Common myeloid progenitor, CD34-positive (primary cell): ENCODE measurements at regions of chr6 and their contacts with region 1.

Region 1: DNA sequence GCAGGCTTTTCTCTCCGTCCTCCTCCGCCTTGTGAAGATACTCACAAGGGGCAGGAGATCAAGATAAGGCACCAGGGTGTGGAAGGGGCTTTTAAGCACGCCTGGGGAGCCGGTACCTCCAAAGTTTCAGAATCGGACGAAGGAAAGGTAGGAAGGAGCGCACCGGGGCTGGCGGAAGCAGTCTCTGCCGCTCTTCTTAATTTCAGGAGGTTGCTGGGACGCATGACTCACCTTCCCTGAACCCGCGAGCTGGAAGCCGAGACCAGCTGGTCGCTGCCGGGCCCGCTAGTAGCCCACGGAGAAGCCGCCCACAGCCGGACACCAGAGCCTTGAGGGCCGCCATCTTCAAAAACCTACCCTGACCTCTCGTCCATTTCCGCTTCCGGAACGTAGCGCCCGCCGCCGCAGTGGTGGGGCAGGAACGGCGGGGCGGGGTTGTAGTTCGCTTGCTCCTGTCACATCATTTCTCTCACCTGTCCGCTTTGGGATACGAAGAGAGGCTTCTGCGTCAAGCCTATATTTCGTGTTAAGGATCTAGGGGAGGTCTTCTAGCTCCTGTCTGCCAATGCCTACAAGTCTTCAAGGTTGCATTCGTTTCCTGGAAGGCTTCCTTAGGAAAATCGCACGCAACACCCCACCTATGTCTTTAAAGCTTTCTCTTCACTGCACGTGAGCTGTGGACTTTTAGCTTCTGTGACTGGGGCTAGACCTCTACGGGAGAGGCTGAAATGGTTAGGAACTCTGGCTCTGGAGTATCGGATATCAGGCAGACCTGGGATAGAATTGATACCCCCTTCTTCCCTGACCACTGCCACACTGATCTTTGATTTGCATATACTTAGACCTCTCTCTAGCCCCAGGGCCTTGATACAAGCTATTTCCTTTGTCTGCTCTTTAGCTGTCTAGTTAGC is at the start of gene MRPS18A:
- DNase-seq: peak; percentile 51 to 64 (median 53)
- H3K4me3 ChIP-seq: peak within 1 kb of the TSS; percentile 91 to 98 (median 94)
- H3K27ac ChIP-seq: peak within 1 kb of the TSS; percentile 76 to 83
- H3K4me1 ChIP-seq: peaks cover 7 to 27% (median 12%) of the 10 kb centered on the region in 4 experiments
- H3K27me3 ChIP-seq: peaks cover 0 to 4% (median 3%) of the 10 kb centered on the region in 5 experiments

Region 2: GRCh38 chr6:43698584-43699349 is 11.1 kb after region 1 on chr6:
- CTCF ChIA-PET with region 1: interaction called, 17 read pairs
- POLR2A ChIA-PET with region 1: no interaction called
- DNase-seq: no peak
- H3K4me3 ChIP-seq: no peak overlapping the region
- H3K27ac ChIP-seq: no peak overlapping the region
- H3K4me1 ChIP-seq: peaks cover 0 to 11% (median 4%) of the 10 kb centered on the region in 4 experiments
- H3K27me3 ChIP-seq: peaks cover 0 to 3% (median 0%) of the 10 kb centered on the region in 5 experiments

Region 3: DNA sequence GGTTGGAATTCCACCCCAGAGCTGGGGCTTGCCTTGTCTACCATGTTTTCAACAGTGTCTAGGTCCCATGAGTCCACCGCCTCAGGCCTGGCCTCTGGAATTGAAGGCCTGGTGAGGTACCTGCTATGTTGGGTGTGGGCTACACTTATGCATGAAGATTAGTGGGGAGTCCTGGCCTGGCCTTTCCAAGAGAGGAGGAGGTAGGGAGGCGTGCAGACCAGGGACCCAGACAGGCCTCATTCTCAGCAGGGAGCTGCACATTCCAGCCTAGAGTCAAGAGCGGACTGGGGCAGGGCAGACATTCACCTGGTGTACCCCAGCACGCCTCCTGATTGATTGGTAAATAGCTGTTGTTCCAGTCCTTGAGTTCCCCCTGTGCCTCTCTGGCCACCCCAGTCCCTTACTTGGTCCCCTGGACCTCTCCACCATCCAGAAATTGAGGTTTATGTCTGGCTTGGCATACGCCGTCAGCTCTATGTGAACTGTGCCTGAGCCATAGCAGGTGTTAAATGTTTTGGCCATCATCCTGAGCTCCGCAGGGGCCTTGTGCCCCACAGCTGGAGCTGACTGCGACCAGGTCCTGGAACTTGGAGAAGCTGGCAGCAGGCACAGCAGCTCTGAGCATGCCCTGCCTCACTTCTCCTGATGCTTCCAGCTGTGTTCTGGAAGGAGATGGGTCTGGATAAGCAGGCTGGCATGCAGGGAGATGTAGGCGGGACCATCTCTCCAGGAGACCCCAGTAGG is 74.1 kb after region 1 on chr6:
- CTCF ChIA-PET with region 1: no interaction called
- POLR2A ChIA-PET with region 1: no interaction called
- DNase-seq: no peak
- H3K4me3 ChIP-seq: no peak overlapping the region
- H3K27ac ChIP-seq: no peak overlapping the region
- H3K4me1 ChIP-seq: peaks cover 0 to 6% (median 2%) of the 10 kb centered on the region in 4 experiments
- H3K27me3 ChIP-seq: peaks cover 0 to 3% (median 0%) of the 10 kb centered on the region in 5 experiments

Region 4: DNA sequence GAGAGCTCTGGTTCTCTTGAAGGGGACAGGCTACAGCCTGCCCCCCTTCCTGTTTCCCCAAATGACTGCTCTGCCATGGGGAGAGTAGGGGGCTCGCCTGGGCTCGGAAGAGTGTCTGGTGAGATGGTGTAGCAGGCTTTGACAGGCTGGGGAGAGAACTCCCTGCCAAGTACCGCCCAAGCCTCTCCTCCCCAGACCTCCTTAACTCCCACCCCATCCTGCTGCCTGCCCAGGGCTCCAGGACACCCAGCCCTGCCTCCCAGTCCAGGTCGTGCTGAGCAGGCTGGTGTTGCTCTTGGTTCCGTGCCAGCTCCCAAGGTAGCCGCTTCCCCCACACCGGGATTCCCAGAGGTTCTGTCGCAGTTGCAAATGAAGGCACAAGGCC is 92.2 kb after region 1 on chr6:
- CTCF ChIA-PET with region 1: no interaction called
- POLR2A ChIA-PET with region 1: no interaction called
- DNase-seq: no peak
- H3K4me3 ChIP-seq: no peak overlapping the region
- H3K27ac ChIP-seq: no peak overlapping the region
- H3K4me1 ChIP-seq: peaks cover 2 to 22% (median 13%) of the 10 kb centered on the region in 4 experiments
- H3K27me3 ChIP-seq: no peaks in the 10 kb centered on the region